B cell (primary cell): ENCODE measurements at regions of chr7 and their contacts with region 1.

Region 1: DNA sequence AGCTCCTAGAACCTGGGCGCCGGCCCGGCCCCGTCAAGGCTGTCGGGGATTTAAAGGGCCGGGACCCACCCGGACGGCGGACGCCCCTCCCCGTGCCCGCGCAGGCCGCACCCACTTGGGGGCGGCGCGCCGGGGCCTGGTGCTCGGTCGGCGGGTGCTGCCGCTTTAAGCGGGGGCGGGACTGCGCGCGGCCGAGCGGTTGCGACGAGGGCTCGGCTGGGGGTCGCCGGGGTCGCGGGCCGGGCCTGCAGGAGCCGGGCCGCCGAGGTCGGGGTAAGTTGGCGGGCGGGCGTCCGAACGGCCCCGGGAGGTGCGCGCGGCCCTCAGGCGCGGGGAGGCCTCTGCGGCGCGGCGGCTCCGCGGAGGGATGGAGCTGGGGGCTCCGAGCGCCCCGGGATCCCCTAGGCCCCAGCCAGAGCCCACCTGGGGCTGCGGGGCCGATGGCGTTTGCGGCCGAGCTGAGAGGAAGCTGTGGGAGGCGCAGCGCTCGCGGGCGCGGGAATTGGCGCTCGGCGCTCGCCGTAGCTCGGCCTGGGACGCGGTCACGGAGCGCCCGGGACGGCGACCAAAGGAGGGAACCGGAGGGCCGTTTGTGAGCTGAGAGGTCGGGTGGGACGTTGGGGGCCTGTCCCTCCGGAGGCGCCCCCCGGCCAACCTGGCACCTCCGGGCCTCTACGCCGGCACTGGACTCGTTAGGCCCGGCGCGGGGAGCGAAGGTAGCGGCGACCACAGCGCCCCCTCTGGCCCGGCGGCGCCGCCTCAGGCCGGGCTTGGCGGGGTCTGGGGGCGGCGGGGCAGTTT is at the start of gene TRRAP:
- DNase-seq: peak; percentile 91
- ATAC-seq: peak; percentile 75
- H3K4me3 ChIP-seq: peak within 1 kb of the TSS; percentile 12 to 100 (median 98)
- H3K4me3 Mint-ChIP-seq: peak within 1 kb of the TSS; percentile 92
- H3K27ac ChIP-seq: peak within 1 kb of the TSS; percentile 75 to 89
- H3K27ac Mint-ChIP-seq: peak within 1 kb of the TSS; percentile 90
- H3K4me1 ChIP-seq: peaks cover 11 to 16% of the 10 kb centered on the region in 2 donors
- H3K4me1 Mint-ChIP-seq: peaks cover 11% of the 10 kb centered on the region
- H3K27me3 ChIP-seq: peaks cover 0 to 6% (median 0%) of the 10 kb centered on the region in 4 experiments
- H3K27me3 Mint-ChIP-seq: no peaks in the 10 kb centered on the region
- CTCF ChIP-seq: peak; percentile 94
- total RNA-seq, gene TRRAP: 102 and 107 TPM in 2 replicates

Region 2: GRCh38 chr7:98315341-98315983 is 563.1 kb before region 1 on chr7:
- CTCF ChIA-PET with region 1: no interaction called
- POLR2A ChIA-PET with region 1: no interaction called
- intact Hi-C with region 1: loop called (anchors 10 kb)
- DNase-seq: peak; percentile 79
- ATAC-seq: peak; percentile 57
- H3K4me3 ChIP-seq: peak overlapping the region in 1 of 5 experiments; percentile 23
- H3K4me3 Mint-ChIP-seq: peak overlapping the region; percentile 56
- H3K27ac ChIP-seq: peak overlapping the region; percentile 72 to 87
- H3K27ac Mint-ChIP-seq: no peak overlapping the region
- H3K4me1 ChIP-seq: peaks cover 26 to 41% of the 10 kb centered on the region in 2 donors
- H3K4me1 Mint-ChIP-seq: peaks cover 41% of the 10 kb centered on the region
- H3K27me3 ChIP-seq: peaks cover 0 to 28% (median 16%) of the 10 kb centered on the region in 4 experiments
- H3K27me3 Mint-ChIP-seq: peaks cover 24% of the 10 kb centered on the region
- CTCF ChIP-seq: no peak

Region 3: DNA sequence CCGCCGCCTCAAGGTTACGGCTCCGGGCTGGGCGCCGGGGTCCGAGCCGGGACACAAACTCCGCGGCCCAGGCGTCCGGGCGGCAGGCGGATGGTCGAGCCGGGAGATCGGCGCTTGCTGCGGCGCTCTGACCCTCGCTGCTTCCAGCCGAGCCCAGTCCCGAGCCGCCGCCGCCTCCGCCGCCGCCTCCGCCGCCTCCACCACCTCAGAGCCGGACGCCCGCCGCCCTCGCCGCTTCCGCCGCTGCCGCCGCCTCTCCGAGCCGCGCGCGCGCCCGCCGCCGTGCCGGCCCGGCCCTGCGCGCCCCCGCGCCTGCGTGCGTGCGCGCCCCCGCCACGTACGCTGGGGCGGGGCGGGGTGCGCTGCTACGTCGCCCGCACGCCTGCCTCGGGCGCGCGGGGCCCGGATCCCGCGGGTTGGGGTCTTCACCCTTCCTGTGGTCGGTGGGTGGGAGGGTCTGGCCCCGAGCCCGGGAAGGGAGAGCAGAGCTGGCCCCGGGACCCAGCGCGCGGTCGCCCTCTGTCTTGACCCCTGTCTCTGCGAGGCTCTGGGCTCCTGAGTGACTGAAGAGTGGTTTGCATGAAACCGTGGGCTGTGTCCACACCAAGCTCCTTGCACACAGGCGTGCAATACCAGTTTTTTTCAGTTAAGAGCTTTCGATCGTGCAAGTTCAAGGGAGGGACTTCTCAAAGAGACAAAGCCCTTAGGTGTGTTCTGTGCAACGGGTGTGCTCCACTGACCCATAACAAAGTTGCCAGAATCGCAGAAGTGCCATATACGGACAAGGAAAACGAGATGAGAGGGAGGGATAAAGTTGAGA is 265.5 kb after region 1 on chr7 and contains the start of gene SMURF1:
- CTCF ChIA-PET with region 1: interaction called, 3 read pairs
- POLR2A ChIA-PET with region 1: no interaction called
- intact Hi-C with region 1: loop called (anchors 10 kb)
- DNase-seq: peak; percentile 89
- ATAC-seq: peak; percentile 69
- H3K4me3 ChIP-seq: peak within 1 kb of the TSS; percentile 71 to 97 (median 83)
- H3K4me3 Mint-ChIP-seq: peak within 1 kb of the TSS; percentile 98
- H3K27ac ChIP-seq: peak within 1 kb of the TSS; percentile 42 to 87
- H3K27ac Mint-ChIP-seq: peak within 1 kb of the TSS; percentile 93
- H3K4me1 ChIP-seq: peaks cover 0 to 20% of the 10 kb centered on the region in 2 donors
- H3K4me1 Mint-ChIP-seq: peaks cover 29% of the 10 kb centered on the region
- H3K27me3 ChIP-seq: peaks cover 0 to 2% (median 0%) of the 10 kb centered on the region in 4 experiments
- H3K27me3 Mint-ChIP-seq: peaks cover 4% of the 10 kb centered on the region
- CTCF ChIP-seq: no peak
- total RNA-seq, gene SMURF1: 27.1 and 28.6 TPM in 2 replicates

Region 4: DNA sequence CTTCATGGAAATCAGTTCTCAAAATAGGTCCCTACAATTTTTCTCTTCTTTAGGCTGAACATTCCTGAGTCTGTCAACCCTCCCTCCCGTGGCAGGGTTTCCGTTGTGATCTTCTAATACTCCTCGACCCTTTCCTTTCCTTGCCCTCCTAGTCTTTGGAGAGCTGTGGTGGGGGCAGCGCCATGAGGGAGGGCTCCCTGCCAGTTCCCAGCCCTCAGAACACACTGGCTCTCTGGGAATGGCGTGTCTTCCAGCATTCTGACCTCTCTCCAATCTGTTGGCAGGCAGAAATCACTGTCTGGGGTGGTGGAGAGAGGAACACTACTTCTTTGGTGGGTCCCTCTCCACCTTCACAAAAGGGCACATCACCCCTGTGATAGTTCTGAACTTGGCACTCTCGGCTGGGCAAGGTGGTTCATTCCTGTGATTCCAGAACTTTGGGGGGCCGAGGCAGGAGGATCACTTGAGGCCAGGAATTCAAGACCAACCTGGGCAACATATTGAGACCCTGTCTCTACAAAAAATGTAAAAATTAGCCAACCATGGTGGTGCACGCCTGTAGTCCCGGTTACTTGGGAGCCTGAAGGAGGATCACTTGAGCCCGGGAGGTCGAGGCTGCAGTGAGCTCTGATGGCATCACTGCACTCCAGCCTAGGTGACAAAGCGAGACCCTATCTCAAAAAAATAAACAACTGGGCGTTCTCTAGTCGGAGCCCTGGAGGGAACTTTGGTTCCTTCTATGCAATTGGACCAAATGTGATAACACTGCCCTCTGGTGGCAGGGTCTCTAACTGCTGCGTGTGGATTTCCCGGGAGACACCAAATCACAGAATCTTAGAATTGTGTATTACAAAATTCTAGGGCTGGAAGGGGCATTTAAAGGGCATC is 434.0 kb after region 1 on chr7:
- CTCF ChIA-PET with region 1: no interaction called
- POLR2A ChIA-PET with region 1: no interaction called
- intact Hi-C with region 1: loop called (anchors 10 kb)
- DNase-seq: peak; percentile 77
- ATAC-seq: peak; percentile 68
- H3K4me3 ChIP-seq: peak overlapping the region in 2 of 5 experiments; percentile 39 to 40
- H3K4me3 Mint-ChIP-seq: peak overlapping the region; percentile 14
- H3K27ac ChIP-seq: no peak overlapping the region
- H3K27ac Mint-ChIP-seq: no peak overlapping the region
- H3K4me1 ChIP-seq: peaks cover 0 to 8% of the 10 kb centered on the region in 2 donors
- H3K4me1 Mint-ChIP-seq: peaks cover 4% of the 10 kb centered on the region
- H3K27me3 ChIP-seq: peaks cover 0 to 3% (median 0%) of the 10 kb centered on the region in 4 experiments
- H3K27me3 Mint-ChIP-seq: peaks cover 3% of the 10 kb centered on the region
- CTCF ChIP-seq: peak; percentile 91